B cell (primary cell): ENCODE measurements at regions of chr1 and their contacts with region 1.

Region 1: DNA sequence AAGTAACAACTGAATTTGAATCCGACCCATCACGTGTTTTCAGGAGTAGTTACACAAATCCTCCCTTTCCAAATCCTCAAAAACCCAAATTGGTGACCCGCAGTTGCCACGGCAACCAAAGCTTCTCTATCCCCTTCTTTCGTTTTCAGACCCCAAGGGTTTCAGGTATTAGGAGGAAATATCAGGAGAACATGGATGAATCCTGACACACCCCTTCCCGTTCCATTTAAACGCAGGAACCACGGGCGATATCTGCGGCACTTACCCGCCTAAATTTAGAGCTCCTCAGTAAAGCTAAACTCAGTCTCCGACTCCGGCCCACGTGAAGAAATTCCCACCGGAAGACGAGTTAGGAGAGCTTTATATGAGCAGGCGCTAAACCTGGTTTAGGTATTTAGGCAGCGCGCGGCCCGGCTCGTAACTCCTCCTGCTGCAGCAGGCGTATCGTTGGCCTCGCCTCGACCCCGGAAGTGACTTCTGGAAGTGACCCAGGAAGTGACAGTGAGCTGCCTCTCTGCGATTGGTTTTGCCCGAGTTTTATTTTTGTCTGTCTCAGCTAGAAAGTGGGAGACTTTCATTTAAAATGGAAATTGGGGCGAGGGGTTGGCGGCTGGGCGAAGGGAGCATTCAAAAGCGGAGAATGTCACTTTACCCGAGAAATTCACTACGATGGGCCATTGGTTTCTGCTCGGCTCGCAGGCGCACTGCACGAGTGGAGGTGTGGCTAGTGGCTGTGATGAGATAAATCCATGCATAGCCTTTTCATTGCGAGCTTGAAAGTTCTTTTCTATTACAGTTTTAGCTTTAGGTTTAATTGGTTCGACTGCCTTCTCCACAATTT is at the start of gene TAF1A:
- DNase-seq: peak; percentile 87
- ATAC-seq: peak; percentile 99
- H3K4me3 ChIP-seq: peak within 1 kb of the TSS; percentile 68 to 95 (median 93)
- H3K4me3 Mint-ChIP-seq: peak within 1 kb of the TSS; percentile 98
- H3K27ac ChIP-seq: peak within 1 kb of the TSS; percentile 66 to 92
- H3K27ac Mint-ChIP-seq: peak within 1 kb of the TSS; percentile 98
- H3K4me1 ChIP-seq: peaks cover 28 to 37% of the 10 kb centered on the region in 2 donors
- H3K4me1 Mint-ChIP-seq: peaks cover 54% of the 10 kb centered on the region
- H3K27me3 ChIP-seq: no peaks in the 10 kb centered on the region
- H3K27me3 Mint-ChIP-seq: no peaks in the 10 kb centered on the region
- CTCF ChIP-seq: no peak
- total RNA-seq, gene TAF1A: 23.7 and 25.9 TPM in 2 replicates

Region 2: GRCh38 chr1:222617367-222617951 is 27.8 kb after region 1 on chr1:
- CTCF ChIA-PET with region 1: no interaction called
- POLR2A ChIA-PET with region 1: no interaction called
- intact Hi-C with region 1: loop called (anchors 1 kb)
- DNase-seq: peak; percentile 95
- ATAC-seq: peak; percentile 90
- H3K4me3 ChIP-seq: peak overlapping the region; percentile 6 to 91 (median 67)
- H3K4me3 Mint-ChIP-seq: peak overlapping the region; percentile 96
- H3K27ac ChIP-seq: peak overlapping the region; percentile 71 to 82
- H3K27ac Mint-ChIP-seq: peak overlapping the region; percentile 95
- H3K4me1 ChIP-seq: peaks cover 17 to 18% of the 10 kb centered on the region in 2 donors
- H3K4me1 Mint-ChIP-seq: peaks cover 29% of the 10 kb centered on the region
- H3K27me3 ChIP-seq: peaks cover 0 to 15% (median 6%) of the 10 kb centered on the region in 4 experiments
- H3K27me3 Mint-ChIP-seq: peaks cover 19% of the 10 kb centered on the region
- CTCF ChIP-seq: no peak